ENCODE measurements at regions of chr5 and their contacts with region 1.

Region 1: GRCh38 chr5:172006321-172007174 is at the start of gene FBXW11:
- DNase-seq: peak; percentile 84 to 96 (median 92)
- ATAC-seq: peak; percentile 89 to 94 (median 90)
- H3K4me3 ChIP-seq: peak within 1 kb of the TSS; percentile 65 to 99
- H3K4me3 Mint-ChIP-seq: peak within 1 kb of the TSS; percentile 96 to 98 (median 98)
- H3K27ac ChIP-seq: peak within 1 kb of the TSS; percentile 93
- H3K27ac Mint-ChIP-seq: peak within 1 kb of the TSS; percentile 94 to 100
- H3K4me1 ChIP-seq: peaks cover 11 to 27% of the 10 kb centered on the region in 2 experiments
- H3K4me1 Mint-ChIP-seq: peaks cover 53 to 58% (median 54%) of the 10 kb centered on the region in 3 donors
- H3K27me3 ChIP-seq: no peaks in the 10 kb centered on the region
- H3K27me3 Mint-ChIP-seq: no peaks in the 10 kb centered on the region
- total RNA-seq, gene FBXW11: 33.4 to 36.6 (median 34.2) TPM

Region 2: DNA sequence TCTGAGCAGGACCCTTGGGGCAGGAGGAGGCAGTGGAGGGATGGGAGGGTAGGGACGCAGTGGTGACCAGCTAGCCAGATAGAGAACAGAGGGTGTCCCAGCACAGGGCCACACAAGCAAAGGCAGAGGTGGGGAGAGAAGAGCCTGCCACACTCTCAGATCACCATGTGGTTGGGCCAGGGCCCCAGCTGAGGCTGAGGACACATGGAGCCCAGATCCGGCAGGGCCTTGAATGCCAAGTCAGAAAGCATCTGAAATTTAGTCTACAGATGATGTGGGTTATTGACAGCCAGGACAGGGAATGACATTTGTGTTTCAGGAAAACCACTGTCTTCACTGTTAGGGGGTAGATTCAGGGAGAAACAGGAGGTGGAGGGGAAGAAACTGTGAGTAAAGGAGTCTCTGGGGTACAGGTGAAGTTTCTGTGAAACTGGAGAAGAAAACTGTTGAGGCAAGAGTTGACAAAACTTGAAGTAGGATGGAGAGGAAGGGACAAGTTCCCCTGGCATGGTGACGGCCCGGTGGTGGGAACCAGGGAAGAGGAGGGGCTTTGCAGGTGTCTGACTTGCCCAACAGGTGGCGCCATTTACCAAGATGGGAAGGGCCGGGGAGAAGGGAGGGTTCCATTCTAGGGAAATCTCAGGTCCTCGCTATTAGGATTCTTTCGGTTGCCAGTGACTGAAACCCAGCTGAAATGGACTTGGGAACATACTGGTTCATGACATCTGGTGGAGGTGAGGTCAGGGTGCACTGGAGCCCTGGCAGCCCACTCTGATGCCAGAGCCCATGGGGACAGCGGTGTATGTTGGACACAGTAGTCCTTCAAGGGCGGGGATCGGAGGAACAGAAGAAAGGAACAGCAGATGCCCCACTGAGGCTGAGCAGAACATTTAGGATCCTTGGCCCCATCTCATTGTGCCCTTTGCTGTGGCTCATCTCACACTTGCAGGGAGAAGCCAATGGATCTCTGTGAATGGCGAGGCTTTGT is 1402.7 kb before region 1 on chr5:
- CTCF ChIA-PET with region 1: no interaction called
- POLR2A ChIA-PET with region 1: no interaction called
- DNase-seq: peak in 13 of 35 experiments; percentile 5 to 25 (median 8)
- ATAC-seq: no peak
- H3K4me3 ChIP-seq: no peak overlapping the region
- H3K4me3 Mint-ChIP-seq: no peak overlapping the region
- H3K27ac ChIP-seq: no peak overlapping the region
- H3K27ac Mint-ChIP-seq: no peak overlapping the region
- H3K4me1 ChIP-seq: no peaks in the 10 kb centered on the region
- H3K4me1 Mint-ChIP-seq: no peaks in the 10 kb centered on the region
- H3K27me3 ChIP-seq: peaks cover 0 to 34% of the 10 kb centered on the region in 2 experiments
- H3K27me3 Mint-ChIP-seq: peaks cover 13 to 25% of the 10 kb centered on the region in 2 donors

Region 3: DNA sequence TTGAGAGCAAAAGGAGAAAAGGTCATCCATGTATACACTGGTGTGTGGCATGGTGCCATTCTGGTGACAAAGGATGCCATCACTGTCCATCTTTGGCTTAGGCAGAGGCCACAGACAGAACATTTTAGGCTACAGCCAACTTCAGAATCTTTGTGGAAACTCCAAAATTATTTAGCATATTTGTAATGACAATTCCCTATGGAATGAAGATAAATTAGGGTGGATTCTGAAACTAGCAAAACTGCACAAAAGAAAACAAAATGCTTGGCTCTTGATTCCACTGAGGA is 92.6 kb before region 1 on chr5:
- CTCF ChIA-PET with region 1: interaction called in 1 of 2 experiments, 26 read pairs
- POLR2A ChIA-PET with region 1: interaction called in 1 of 2 experiments, 5 read pairs
- DNase-seq: no peak
- ATAC-seq: no peak
- H3K4me3 ChIP-seq: no peak overlapping the region
- H3K4me3 Mint-ChIP-seq: no peak overlapping the region
- H3K27ac ChIP-seq: no peak overlapping the region
- H3K27ac Mint-ChIP-seq: peak overlapping the region; percentile 81 to 83
- H3K4me1 ChIP-seq: peaks cover 4 to 7% of the 10 kb centered on the region in 2 experiments
- H3K4me1 Mint-ChIP-seq: peaks cover 45 to 52% (median 49%) of the 10 kb centered on the region in 3 donors
- H3K27me3 ChIP-seq: no peaks in the 10 kb centered on the region
- H3K27me3 Mint-ChIP-seq: no peaks in the 10 kb centered on the region

Region 4: GRCh38 chr5:172049226-172049796 is 42.8 kb after region 1 on chr5:
- CTCF ChIA-PET with region 1: no interaction called
- POLR2A ChIA-PET with region 1: no interaction called
- DNase-seq: peak in 1 of 35 experiments; percentile 21
- ATAC-seq: no peak
- H3K4me3 ChIP-seq: no peak overlapping the region
- H3K4me3 Mint-ChIP-seq: no peak overlapping the region
- H3K27ac ChIP-seq: no peak overlapping the region
- H3K27ac Mint-ChIP-seq: peak overlapping the region; percentile 71 to 77
- H3K4me1 ChIP-seq: no peaks in the 10 kb centered on the region
- H3K4me1 Mint-ChIP-seq: peaks cover 5 to 12% (median 8%) of the 10 kb centered on the region in 3 donors
- H3K27me3 ChIP-seq: no peaks in the 10 kb centered on the region
- H3K27me3 Mint-ChIP-seq: no peaks in the 10 kb centered on the region

Region 5: GRCh38 chr5:172071289-172071875 is 64.8 kb after region 1 on chr5:
- CTCF ChIA-PET with region 1: interaction called in 1 of 2 experiments, 9 read pairs
- POLR2A ChIA-PET with region 1: interaction called in 1 of 2 experiments, 16 read pairs
- DNase-seq: peak in 1 of 35 experiments; percentile 46
- ATAC-seq: no peak
- H3K4me3 ChIP-seq: no peak overlapping the region
- H3K4me3 Mint-ChIP-seq: peak overlapping the region in 1 of 3 donors; percentile 54
- H3K27ac ChIP-seq: peak overlapping the region; percentile 34
- H3K27ac Mint-ChIP-seq: peak overlapping the region; percentile 85 to 89
- H3K4me1 ChIP-seq: peaks cover 34 to 38% of the 10 kb centered on the region in 2 experiments
- H3K4me1 Mint-ChIP-seq: peaks cover 52 to 61% (median 60%) of the 10 kb centered on the region in 3 donors
- H3K27me3 ChIP-seq: no peaks in the 10 kb centered on the region
- H3K27me3 Mint-ChIP-seq: no peaks in the 10 kb centered on the region